HEK293 (cell line): ENCODE measurements at regions of chr17 and their contacts with region 1.

Region 1: GRCh38 chr17:44170499-44171201 is at the start of gene ASB16:
- H3K4me3 ChIP-seq: no peak within 1 kb of the TSS
- H3K27ac ChIP-seq: no peak within 1 kb of the TSS
- H3K4me1 ChIP-seq: peaks cover 6% of the 10 kb centered on the region; the same call in 1 of the 2 replicates
- CTCF ChIP-seq: no peak

Region 2: DNA sequence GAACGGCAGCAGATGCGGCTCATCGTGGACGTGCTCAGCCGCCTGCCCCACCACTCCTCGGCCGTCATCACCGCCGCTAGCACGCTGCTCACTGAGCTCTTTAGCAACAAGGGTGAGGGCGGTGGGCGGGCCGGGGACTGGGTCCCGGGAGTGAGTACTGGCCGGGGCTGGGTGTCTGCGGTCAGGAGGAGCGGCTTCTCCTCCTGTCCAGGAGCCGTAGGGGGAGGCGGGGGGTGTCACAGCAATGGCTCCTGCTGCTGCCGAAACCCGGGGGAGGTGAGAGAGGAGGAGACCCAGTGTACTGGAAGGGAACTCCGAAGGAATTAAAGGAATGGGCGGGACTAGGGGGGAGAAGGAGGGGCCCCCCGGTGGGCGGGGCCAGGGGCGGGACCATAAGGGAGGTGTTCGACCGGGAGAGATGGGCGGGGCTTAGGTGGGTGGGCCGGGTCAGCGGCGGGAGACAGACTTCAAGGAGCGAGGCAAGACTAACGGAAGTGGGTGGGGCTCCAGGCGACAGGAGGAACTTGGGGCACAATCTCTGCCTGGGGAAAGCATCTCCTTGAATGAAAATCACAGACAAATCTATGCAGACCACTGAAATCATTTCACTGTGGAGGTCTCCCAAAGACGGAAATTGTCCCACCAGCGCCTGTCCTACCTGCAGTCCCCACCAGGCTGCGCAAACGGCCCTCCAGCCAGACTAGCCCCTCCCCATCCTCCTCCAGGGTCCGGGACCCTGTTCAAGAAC is 163.9 kb before region 1 on chr17:
- CTCF ChIA-PET with region 1: interaction called, 18 read pairs
- POLR2A ChIA-PET with region 1: interaction called, 6 read pairs
- H3K4me3 ChIP-seq: peak overlapping the region; percentile 72
- H3K27ac ChIP-seq: peak overlapping the region; percentile 71
- H3K4me1 ChIP-seq: peaks cover 9% of the 10 kb centered on the region
- CTCF ChIP-seq: peak; percentile 61

Region 3: GRCh38 chr17:44086364-44087311 is 84.0 kb before region 1 on chr17:
- CTCF ChIA-PET with region 1: interaction called, 35 read pairs
- POLR2A ChIA-PET with region 1: interaction called, 5 read pairs
- H3K4me3 ChIP-seq: no peak overlapping the region
- H3K27ac ChIP-seq: peak overlapping the region; percentile 25; the same call in 1 of the 2 replicates
- H3K4me1 ChIP-seq: peaks cover 10% of the 10 kb centered on the region
- CTCF ChIP-seq: no peak

Region 4: DNA sequence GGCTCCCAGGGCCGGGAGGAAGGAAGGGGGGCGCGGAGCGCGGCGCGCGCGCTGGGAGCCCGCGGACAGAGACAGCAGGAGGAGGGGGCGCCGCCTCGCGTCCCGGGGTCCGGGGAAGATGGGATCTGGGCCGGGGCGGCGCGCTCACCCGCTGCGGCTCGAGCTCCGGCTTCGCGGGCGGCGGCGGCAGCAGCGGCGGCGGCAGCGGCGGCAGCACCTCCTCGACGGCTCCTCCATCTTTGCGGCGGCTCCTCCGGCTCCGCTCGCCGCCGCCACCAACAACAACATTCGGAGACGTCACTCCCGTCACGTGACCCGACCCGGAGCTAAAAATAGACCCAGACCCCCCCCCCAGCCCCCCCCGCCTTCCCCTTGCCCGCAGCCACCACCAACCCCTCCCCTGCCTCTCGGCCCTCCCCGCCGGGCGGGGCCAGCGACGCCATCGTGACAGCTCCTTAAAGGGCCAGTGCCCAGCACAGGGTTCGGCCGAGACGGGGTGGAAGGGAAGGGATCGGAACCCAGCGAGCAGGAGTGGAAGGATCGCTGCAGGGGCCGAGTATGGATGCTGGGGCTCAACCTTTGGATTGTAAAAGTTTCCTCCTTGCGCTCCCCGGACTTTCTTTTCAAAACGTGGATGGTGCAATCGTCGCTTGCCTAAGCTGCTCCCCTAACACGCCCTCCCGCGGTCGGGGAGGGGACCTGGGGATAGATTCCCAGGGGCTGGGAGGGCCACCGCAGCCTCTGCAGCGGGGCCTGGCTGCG is 47.1 kb before region 1 on chr17 and contains the start of gene HDAC5:
- CTCF ChIA-PET with region 1: interaction called, 10 read pairs
- POLR2A ChIA-PET with region 1: interaction called, 5 read pairs
- H3K4me3 ChIP-seq: peak within 1 kb of the TSS; percentile 64
- H3K27ac ChIP-seq: peak within 1 kb of the TSS; percentile 88
- H3K4me1 ChIP-seq: no peaks in the 10 kb centered on the region; the same call in 1 of the 2 replicates
- CTCF ChIP-seq: peak; percentile 95

Region 5: DNA sequence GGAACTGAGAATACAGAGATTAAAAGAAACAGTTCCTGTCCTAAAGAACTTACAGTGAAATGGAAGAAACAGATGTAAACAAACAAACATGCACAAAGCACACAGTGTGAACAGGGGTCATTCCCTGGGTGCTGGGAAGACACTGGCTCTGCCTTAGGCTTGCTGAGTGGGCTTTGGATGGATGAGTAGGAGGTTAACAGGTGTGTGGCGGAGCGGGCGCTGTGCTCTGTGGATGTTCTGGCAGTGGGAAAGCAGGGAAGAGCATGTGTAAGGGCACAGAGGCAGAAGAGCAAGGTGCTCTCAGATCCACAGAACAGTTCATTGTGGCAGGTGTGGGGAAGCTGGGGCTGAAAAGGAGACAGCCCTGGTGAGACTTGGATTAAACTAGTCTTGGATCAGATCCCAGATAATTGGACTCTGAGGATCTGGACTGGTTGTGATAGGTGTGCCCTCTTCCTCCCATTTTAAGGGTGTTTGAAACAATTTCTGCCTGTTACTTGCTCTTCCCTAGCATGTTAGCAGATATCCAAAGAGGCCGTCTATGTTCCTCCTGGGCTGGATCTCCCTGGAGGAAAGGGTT is 20.8 kb before region 1 on chr17:
- CTCF ChIA-PET with region 1: interaction called, 20 read pairs
- POLR2A ChIA-PET with region 1: interaction called, 14 read pairs
- H3K4me3 ChIP-seq: no peak overlapping the region
- H3K27ac ChIP-seq: peak overlapping the region; percentile 29
- H3K4me1 ChIP-seq: peaks cover 3% of the 10 kb centered on the region; the same call in 1 of the 2 replicates
- CTCF ChIP-seq: no peak

Region 6: DNA sequence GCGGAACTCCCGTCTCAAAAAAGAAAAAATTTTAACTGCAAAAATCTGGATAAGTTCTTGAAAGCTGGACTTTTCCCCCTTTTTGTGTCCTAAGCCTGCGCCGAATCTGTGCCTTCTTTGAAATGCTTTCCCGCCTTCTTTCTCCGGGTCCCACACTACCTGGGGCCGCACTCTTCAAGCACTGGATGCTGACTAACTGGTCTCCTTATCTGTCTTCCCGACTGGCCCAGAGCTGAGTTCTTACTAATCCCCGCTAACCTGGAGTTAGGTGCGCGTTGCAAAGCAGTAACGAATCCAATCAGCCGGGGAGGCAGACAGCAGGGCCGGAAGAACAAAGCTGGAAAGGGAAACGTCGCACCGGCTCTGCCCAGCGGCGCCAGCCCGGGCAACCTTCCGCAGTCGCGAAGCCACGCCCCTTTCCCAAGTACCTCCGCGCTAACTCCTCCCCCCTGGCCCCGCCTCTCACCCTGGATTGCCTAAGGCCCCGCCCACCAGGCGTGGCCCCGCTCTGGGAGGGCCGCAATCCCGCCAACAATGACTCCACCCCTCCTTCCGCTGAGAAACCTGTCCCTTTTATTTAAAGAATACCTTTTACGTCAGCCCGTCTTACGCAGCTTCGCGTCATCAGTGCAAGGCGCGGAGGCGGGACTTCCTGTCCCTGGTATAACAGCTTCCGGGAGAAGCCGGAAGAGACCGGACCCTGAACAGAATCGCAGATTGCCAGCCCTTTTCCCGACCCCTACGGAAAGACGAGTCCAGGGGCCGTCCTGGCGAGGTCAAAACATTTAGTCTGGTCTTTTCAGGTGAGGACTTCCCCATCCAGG is 15.9 kb after region 1 on chr17 and contains the start of gene TMUB2:
- CTCF ChIA-PET with region 1: interaction called, 16 read pairs
- POLR2A ChIA-PET with region 1: interaction called, 24 read pairs
- H3K4me3 ChIP-seq: peak within 1 kb of the TSS; percentile 77
- H3K27ac ChIP-seq: peak within 1 kb of the TSS; percentile 91
- H3K4me1 ChIP-seq: peaks cover 3% of the 10 kb centered on the region
- CTCF ChIP-seq: no peak

Region 7: DNA sequence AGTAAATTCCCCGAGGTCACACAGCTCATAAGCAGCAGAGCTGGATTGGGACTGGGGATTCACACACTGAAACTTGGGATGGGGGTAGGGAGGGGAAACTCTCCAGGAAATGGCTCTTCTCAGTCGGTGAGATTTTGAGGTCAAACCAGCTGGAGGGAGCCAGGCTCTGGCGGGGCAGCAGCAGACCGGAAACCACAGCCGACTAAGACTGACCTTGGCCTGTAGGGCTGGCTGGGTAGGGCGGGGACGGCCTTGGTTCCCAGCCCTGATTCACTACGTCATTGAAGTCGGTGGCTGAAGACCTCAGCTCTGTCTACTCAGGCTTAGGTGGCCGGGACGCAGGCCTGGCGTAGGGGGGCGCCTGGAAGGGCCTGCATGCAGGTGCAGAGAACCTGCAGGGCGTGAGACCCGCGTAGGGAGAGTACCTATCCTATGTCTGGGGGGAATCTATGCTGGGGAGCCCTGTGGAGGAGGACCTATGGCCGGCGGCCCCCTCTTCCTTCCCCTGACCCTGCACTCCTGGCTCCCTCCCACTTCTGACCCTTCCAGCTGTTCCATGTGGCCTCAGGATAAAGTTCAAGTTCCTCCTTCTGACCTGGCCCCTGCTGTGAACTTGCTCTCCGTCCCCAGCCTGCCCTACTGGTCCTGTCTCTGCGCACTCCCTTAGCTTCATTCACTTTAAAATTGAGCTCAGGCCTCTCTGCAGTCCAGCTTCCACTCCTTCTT is 109.2 kb after region 1 on chr17:
- CTCF ChIA-PET with region 1: no interaction called
- POLR2A ChIA-PET with region 1: no interaction called
- H3K4me3 ChIP-seq: no peak overlapping the region
- H3K27ac ChIP-seq: no peak overlapping the region
- H3K4me1 ChIP-seq: no peaks in the 10 kb centered on the region
- CTCF ChIP-seq: no peak

Region 8: GRCh38 chr17:44376124-44376523 is 205.5 kb after region 1 on chr17:
- CTCF ChIA-PET with region 1: no interaction called
- POLR2A ChIA-PET with region 1: no interaction called
- H3K4me3 ChIP-seq: no peak overlapping the region
- H3K27ac ChIP-seq: no peak overlapping the region
- H3K4me1 ChIP-seq: no peaks in the 10 kb centered on the region
- CTCF ChIP-seq: peak; percentile 15; the same call in 1 of the 2 replicates